PC-9 (cell line): ENCODE measurements at regions of chr2 and their contacts with region 1.

Region 1: GRCh38 chr2:237572021-237572741 is 5.8 kb downstream of the PRLH start:
- DNase-seq: peak; percentile 81 to 94
- H3K4me3 ChIP-seq: no peak overlapping the region
- H3K27ac ChIP-seq: no peak overlapping the region
- H3K4me1 ChIP-seq: peaks cover 5% of the 10 kb centered on the region; the same call in 1 of the 2 replicates
- H3K27me3 ChIP-seq: no peaks in the 10 kb centered on the region
- CTCF ChIP-seq: peak; percentile 100

Region 2: DNA sequence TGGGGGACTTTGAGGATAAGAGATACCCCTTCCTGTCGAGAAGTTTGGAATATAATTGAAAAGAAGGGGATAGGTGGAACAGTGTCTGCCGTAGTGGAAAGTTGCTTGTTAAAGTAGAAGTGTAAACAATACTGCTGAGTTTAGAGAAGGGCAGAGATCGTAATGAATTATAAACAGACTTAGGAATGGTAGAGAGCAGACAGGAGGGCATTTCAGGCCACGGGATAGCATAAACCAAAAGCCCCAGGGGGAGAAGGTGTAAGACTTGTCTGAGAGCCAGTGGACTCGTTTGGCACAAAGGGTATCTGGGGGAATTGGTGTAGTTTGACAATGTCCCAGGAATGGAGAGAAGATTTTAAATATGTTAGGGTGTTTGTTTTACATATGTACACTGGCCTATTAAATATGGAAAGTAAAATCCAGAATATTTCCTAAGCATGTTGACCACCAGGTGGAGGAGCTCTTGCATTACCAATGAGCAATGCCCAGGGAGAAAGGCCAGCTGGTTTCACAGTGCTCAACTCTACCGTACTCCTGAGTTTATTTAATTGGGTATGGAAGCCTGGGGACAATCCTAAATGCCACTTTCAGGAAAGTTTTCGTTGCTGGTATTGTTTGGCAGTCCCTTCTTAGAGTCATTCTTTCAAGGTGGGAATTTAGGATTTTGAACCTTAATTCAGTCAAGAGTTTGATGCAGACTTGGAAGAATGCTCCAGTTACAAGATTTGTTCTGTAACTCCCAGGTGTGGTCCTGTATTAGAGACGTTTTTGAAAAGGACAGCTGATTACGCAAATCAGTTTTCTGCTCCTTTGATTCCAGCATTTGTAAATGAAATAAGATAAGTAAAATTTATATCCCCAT is 479.0 kb before region 1 on chr2:
- CTCF ChIA-PET with region 1: no interaction called
- POLR2A ChIA-PET with region 1: no interaction called
- intact Hi-C with region 1: loop called (anchors 1 kb)
- DNase-seq: peak in 1 of 2 experiments; percentile 34
- H3K4me3 ChIP-seq: no peak overlapping the region
- H3K27ac ChIP-seq: no peak overlapping the region
- H3K4me1 ChIP-seq: no peaks in the 10 kb centered on the region
- H3K27me3 ChIP-seq: no peaks in the 10 kb centered on the region
- CTCF ChIP-seq: peak; percentile 62

Region 3: GRCh38 chr2:237154082-237154638 is 418.0 kb before region 1 on chr2:
- CTCF ChIA-PET with region 1: interaction called, 6 read pairs
- POLR2A ChIA-PET with region 1: no interaction called
- intact Hi-C with region 1: loop called (anchors 1 kb)
- DNase-seq: peak; percentile 52 to 69
- H3K4me3 ChIP-seq: no peak overlapping the region
- H3K27ac ChIP-seq: no peak overlapping the region
- H3K4me1 ChIP-seq: no peaks in the 10 kb centered on the region
- H3K27me3 ChIP-seq: no peaks in the 10 kb centered on the region
- CTCF ChIP-seq: peak; percentile 90

Region 4: GRCh38 chr2:237171396-237171795 is 400.8 kb before region 1 on chr2:
- CTCF ChIA-PET with region 1: interaction called, 4 read pairs
- POLR2A ChIA-PET with region 1: no interaction called
- intact Hi-C with region 1: loop called (anchors 1 kb)
- DNase-seq: peak; percentile 50 to 78
- H3K4me3 ChIP-seq: no peak overlapping the region
- H3K27ac ChIP-seq: no peak overlapping the region
- H3K4me1 ChIP-seq: peaks cover 13% of the 10 kb centered on the region
- H3K27me3 ChIP-seq: no peaks in the 10 kb centered on the region
- CTCF ChIP-seq: peak; percentile 65

Region 5: GRCh38 chr2:237474931-237475703 is 97.1 kb before region 1 on chr2:
- CTCF ChIA-PET with region 1: interaction called, 4 read pairs
- POLR2A ChIA-PET with region 1: no interaction called
- intact Hi-C with region 1: loop called (anchors 1 kb)
- DNase-seq: peak; percentile 53 to 90
- H3K4me3 ChIP-seq: peak overlapping the region; percentile 63
- H3K27ac ChIP-seq: peak overlapping the region; percentile 79
- H3K4me1 ChIP-seq: peaks cover 25% of the 10 kb centered on the region
- H3K27me3 ChIP-seq: no peaks in the 10 kb centered on the region
- CTCF ChIP-seq: peak; percentile 97